Left colon (tissue), 2 donors: ENCODE measurements at regions of chr14 and their contacts with region 1.

Region 1: DNA sequence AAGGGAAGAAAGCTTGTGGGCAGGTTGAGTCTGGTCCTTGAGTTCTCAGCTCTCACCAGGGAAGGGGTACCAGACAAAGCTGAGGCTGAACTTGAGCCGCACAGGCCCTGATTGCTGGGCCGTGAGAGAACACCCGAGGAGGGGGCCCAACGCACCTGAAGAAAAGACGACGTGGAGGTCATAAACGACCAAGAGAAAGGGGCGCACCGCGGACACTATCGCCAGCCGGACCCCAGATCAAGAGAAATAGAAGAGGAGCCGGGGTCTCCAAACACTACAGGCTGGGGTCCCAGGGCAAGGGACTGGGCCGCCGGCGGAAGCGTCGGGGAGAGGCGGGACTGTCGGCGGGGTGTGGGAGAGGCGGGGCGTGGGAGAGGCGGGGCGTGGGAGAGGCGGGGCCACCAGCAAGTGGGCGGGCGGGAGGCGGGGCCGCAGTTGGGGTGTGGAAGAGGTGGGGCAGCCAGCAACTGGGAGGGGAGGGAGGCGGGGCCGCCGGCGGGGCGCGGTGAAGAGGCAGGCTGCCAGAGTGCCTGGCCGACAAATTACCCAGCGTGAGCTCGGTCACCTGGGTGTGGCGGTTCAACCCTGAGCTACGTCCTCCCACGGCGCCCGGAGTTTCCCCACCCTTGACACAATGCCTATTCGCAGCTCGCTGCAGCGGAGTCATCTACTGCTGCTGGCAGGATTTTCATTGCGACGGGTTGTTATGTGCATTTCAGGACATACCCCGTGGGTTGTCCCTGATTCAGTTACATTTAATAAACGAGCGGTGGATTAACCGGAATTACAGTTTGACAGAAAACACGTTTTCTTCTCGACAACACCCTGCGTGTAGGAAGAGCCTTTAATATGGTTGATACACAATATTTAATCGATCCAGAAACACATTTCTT is 15.5 kb upstream of the NEMF start:
- DNase-seq: peak; percentile 98 to 99
- ATAC-seq: peak; percentile 93

Region 2: DNA sequence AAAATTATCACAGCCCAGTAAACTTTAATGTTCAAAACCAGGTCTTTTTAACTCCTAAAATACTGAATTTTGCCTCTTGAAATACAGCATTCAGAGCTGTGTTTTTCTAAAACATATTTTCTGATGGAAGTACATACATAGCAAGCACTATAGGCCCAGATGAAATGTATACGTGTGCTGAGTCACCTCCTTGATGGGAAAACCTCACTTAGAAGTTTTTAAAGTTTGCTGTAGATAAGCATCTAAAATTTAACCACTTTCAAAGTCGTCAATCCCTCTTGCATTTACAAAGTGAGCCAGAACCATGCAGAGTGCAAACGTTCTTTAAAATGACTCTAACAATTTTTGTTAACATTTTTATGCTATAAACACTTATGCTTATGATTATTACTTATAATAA is 900.7 kb before region 1 on chr14:
- intact Hi-C with region 1: no loop called
- DNase-seq: no peak
- ATAC-seq: no peak

Region 3: DNA sequence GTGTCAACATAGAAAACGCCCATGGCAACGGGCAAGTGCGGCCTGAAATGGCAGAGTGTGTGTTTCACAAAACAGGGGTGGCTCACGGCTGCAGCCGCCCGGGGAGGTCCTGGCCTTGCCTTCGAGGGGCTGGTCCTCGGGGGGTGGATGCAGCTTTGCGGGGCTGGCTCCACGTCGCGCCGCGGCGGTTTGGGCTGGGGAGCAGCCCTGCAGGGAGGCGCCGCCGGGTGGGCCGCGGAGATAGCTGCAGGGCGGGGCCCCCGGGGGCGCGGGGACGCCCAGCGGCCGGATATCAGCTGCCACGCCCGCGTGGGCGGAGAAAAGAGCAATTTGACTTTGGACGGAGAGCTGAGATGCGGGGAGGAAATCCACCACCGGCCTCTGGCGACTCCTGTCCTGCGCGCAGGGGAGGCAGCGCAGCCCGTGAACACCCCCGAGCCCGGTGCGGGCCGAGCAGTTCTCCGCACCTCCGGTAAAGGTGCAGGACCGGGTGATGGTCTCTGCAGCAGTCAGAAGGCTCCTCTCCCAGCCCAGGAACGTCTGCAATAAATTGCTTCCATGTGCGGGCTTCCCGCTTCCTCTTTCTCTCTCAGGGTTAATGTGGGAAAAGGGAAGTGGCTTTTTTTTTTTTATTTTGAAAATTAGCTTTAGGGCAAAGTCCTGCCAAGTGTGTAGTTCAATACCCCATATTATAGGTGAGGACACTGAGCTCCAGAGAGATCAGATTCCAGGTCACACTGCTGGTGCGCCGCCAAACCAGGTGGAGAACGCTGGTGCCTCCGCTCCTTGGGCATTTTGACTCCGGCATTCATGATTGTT is 135.3 kb after region 1 on chr14:
- intact Hi-C with region 1: loop called in 1 of 2 experiments (anchors 10 kb)
- DNase-seq: peak; percentile 94 to 97
- ATAC-seq: peak; percentile 67